ENCODE measurements at regions of chr13 and their contacts with region 1.

Region 1: GRCh38 chr13:64471916-64472315 is 2758.2 kb downstream of the PCDH9 start:
- DNase-seq: peak; percentile 9
- H3K4me3 ChIP-seq: no peak overlapping the region
- CTCF ChIP-seq: peak; percentile 15

Region 2: GRCh38 chr13:65638572-65639168 is 1166.8 kb after region 1 on chr13:
- CTCF ChIA-PET with region 1: interaction called, 23 read pairs
- POLR2A ChIA-PET with region 1: no interaction called
- DNase-seq: peak; percentile 5
- H3K4me3 ChIP-seq: no peak overlapping the region
- CTCF ChIP-seq: peak; percentile 69

Measured in AG04449 (cell line).